AG04450 (cell line): ENCODE measurements at regions of chr5 and their contacts with region 1.

Region 1: GRCh38 chr5:10145923-10146401 is 103.7 kb downstream of the ATPSCKMT start:
- DNase-seq: peak; percentile 10
- H3K4me3 ChIP-seq: no peak overlapping the region
- H3K27ac ChIP-seq: no peak overlapping the region
- H3K27me3 ChIP-seq: no peaks in the 10 kb centered on the region
- CTCF ChIP-seq: peak; percentile 50

Region 2: GRCh38 chr5:9774472-9775079 is 371.4 kb before region 1 on chr5:
- CTCF ChIA-PET with region 1: interaction called, 20 read pairs
- POLR2A ChIA-PET with region 1: no interaction called
- DNase-seq: peak; percentile 58
- H3K4me3 ChIP-seq: no peak overlapping the region
- H3K27ac ChIP-seq: no peak overlapping the region
- H3K27me3 ChIP-seq: no peaks in the 10 kb centered on the region
- CTCF ChIP-seq: peak; percentile 54

Region 3: GRCh38 chr5:9903801-9904200 is 242.2 kb before region 1 on chr5:
- CTCF ChIA-PET with region 1: no interaction called
- POLR2A ChIA-PET with region 1: no interaction called
- DNase-seq: no peak
- H3K4me3 ChIP-seq: no peak overlapping the region
- H3K27ac ChIP-seq: no peak overlapping the region
- H3K27me3 ChIP-seq: no peaks in the 10 kb centered on the region
- CTCF ChIP-seq: no peak

Region 4: GRCh38 chr5:10111571-10111970 is 34.4 kb before region 1 on chr5:
- CTCF ChIA-PET with region 1: no interaction called
- POLR2A ChIA-PET with region 1: no interaction called
- DNase-seq: peak; percentile 33
- H3K4me3 ChIP-seq: no peak overlapping the region
- H3K27ac ChIP-seq: no peak overlapping the region
- H3K27me3 ChIP-seq: no peaks in the 10 kb centered on the region
- CTCF ChIP-seq: peak; percentile 65

Region 5: GRCh38 chr5:10424124-10424731 is 278.3 kb after region 1 on chr5:
- CTCF ChIA-PET with region 1: no interaction called
- POLR2A ChIA-PET with region 1: no interaction called
- DNase-seq: no peak
- H3K4me3 ChIP-seq: no peak overlapping the region
- H3K27ac ChIP-seq: no peak overlapping the region
- H3K27me3 ChIP-seq: no peaks in the 10 kb centered on the region
- CTCF ChIP-seq: peak; percentile 65

Region 6: GRCh38 chr5:10536931-10537579 is 391.1 kb after region 1 on chr5:
- CTCF ChIA-PET with region 1: no interaction called
- POLR2A ChIA-PET with region 1: no interaction called
- DNase-seq: no peak
- H3K4me3 ChIP-seq: no peak overlapping the region
- H3K27ac ChIP-seq: no peak overlapping the region
- H3K27me3 ChIP-seq: no peaks in the 10 kb centered on the region
- CTCF ChIP-seq: no peak